Right ventricle myocardium superior (tissue), 1 donor: ENCODE measurements at regions of chr1 and their contacts with region 1.

Region 1: GRCh38 chr1:181142096-181142958 is 53.8 kb downstream of the IER5 start:
- DNase-seq: peak; percentile 92
- ATAC-seq: peak; percentile 98

Region 2: DNA sequence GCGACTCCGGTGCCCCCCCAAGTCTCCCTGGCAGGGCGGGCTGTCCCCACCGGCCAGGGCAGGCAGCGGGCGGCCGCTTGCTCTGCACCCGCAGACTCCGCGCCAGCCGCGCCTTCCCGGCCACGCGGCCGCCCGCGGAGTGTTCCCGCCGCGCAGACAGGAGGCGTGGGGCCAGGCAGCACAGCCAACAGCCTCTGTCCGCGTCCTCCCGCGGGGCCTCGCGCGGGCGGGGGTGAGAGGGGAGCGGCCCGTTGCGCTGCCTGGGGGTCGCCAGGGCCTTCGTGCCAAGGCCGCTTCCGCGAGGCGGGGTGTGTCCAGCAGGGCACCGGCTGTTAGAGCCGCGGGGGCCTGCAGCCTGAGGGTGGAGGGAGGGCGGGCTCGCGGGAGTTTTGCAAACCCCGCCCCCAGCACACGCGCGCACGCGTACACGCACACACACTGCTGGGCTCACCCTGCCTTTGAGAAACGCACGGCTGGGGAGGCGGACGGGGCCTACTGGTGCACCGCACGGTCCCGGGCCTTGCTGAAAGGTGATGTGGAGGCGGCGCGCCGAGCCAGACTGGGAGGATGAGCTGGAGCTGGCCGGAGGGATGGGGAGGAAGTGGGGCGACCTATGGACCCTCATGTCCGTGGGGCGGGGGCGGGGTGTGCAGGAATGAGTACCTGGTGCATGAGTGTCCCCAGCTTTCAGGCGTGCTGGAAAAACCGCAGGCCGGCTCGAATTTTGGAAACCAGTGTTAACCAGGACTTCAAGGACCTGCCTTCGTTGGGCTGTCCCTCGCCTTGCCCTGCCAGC is 188.1 kb before region 1 on chr1:
- intact Hi-C with region 1: no loop called
- DNase-seq: peak; percentile 81
- ATAC-seq: peak; percentile 88

Region 3: DNA sequence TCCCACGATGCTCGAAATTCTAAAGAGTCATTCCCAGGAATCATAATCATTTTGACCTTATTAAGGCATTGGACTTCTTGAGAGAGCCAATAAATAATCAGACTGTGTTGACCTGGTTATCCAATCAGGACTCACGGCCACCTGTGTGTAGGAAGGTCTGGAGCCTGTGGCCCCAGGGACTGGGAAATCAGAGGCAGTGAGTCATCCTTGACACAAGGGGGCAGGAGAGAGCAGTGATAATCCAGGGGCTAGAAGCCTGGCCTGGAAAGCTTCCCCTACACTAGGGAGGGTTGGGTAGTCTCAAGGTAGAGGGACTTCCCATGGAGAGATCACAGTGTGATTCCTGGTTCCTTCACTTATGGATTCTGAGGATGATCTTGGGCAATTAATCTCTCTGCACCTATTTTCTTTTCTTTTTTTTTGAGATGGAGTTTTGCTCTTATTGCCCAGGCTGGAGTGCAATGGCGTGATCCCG is 103.9 kb before region 1 on chr1:
- intact Hi-C with region 1: loop called (anchors 2 kb)
- DNase-seq: peak; percentile 49
- ATAC-seq: peak; percentile 77

Region 4: DNA sequence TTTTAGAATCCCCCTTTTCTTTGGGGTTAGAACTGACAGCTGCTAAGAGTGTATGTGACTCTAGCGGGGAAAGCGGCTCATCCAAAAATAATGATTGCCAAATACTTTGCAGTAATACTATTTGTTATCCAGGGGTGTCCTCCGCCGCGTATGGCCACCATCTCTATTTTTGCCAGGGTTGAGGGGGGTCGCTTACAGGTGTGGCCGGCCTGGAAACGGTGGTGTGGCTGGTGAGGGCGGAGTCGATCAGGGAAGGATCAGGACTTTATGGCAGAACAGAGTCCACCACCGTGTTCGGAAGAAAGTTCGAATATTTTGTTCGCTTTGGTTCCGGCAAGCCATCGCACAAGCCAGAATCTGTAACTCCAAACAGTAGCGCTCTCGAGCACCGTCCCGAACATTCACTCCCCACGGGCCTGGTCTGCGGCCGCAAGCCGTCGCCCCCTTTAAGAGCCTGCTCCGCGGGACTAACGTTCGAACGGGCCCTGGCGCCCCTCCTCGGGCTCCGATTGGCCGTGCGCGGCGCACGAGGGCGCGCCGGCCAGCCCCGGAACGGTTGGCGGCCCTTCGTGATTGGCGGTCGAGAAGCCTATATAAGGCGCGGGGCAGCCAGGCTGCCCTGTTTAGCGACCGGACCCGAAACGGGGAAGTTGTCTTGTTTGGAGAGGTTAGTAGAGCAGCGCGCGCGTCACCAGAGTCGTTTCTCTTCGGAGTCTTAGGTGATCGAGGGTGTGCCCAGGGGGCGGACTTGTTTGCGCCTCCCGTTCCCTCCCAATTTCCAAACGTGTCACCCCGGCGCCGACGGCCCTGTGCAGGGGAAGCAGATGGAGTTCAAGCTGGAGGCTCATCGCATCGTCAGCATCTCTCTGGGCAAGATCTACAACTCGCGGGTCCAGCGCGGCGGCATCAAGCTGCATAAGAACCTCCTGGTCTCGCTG is 54.0 kb before region 1 on chr1 and contains the start of gene IER5:
- intact Hi-C with region 1: loop called (anchors 2 kb)
- DNase-seq: peak; percentile 96
- ATAC-seq: peak; percentile 91
- total RNA-seq, gene IER5: 15.1 TPM

Region 5: GRCh38 chr1:181105134-181106021 is 36.9 kb before region 1 on chr1:
- intact Hi-C with region 1: loop called (anchors 5 kb)
- DNase-seq: peak; percentile 98
- ATAC-seq: peak; percentile 97